Activated CD4-positive, alpha-beta T cell treated with anti-CD3 and anti-CD28 coated beads for 36 hours (primary cell): ENCODE measurements at regions of chr11 and their contacts with region 1.

Region 1: DNA sequence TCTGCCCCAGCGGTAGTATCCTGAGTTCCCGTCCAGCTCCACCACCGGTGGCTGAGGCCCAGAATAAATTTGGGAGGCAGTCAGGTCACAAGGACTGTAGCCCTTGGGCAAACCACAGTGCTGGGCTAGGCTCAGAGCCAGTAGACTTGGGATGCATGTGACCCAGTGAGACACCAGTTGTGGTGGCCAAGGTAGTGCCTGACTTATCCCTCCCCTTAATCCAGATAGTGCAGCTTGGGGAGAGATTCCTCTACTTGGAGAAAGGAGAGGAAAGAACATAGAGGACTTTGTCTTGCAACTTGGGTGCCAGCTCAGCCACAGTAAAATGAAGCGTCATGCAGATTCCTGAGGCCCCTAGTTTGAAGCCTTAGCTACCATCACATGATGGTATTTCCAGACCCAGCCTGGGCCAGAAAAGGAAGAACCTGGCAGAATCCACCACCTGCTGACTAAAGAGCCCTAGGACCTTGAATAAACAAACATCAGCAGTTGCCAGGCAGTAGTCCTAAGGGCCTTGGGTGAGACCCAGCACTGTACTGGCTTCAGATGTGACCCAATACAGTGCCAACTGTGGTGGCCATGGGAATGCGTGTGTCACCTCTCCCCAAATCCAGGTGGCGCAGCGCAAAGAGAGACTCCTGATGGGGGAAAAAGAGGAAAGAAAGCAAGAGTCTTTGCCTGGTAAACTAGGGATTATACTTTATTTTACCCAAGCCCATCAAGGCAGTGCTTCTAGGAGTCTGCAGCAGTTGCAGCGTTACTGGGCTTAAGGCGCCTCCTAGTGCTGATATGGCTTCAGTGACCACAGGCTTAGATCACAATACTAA is 17.0 kb upstream of the DDX10 start:
- DNase-seq: peak; percentile 81
- ATAC-seq: peak; percentile 99
- H3K4me3 Mint-ChIP-seq: no peak overlapping the region
- H3K27ac Mint-ChIP-seq: no peak overlapping the region
- H3K4me1 Mint-ChIP-seq: no peaks in the 10 kb centered on the region
- H3K27me3 Mint-ChIP-seq: no peaks in the 10 kb centered on the region

Region 2: DNA sequence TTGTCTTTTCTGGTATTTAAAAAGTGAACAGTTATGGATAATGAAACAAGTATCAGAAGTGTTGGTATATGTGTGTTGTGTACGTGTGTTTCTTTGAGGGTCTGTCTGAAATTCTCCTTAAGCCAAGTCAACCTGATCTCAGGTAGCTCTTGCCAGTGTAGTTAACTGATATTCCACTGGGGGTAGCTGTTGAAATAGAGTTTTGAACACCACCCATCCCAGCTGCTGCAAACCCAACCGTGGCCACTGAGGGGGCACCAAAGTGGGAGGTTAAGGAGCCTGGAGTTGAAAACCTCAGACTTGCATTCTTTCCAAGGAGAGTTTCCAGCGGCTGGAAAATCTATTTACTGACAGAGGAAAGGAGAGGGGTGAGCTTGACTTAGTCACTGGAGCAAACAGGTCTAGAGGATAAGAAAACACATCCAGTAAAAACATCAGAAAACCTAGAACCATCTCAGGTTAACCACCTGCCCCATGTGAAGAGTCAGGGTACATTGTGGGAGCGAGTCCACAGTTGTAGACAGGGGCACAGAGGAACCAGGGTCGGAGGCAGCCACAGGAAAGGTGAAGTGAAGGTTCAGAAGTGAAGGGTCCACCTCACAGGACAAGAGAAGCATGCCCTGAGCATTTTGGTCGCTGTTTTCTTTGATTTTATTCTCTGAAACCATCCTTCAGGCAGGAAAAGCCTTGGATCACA is 648.0 kb before region 1 on chr11:
- CTCF ChIA-PET with region 1: interaction called, 3 read pairs
- POLR2A ChIA-PET with region 1: no interaction called
- intact Hi-C with region 1: loop called (anchors 2 kb)
- DNase-seq: peak; percentile 58
- ATAC-seq: peak; percentile 85
- H3K4me3 Mint-ChIP-seq: no peak overlapping the region
- H3K27ac Mint-ChIP-seq: no peak overlapping the region
- H3K4me1 Mint-ChIP-seq: no peaks in the 10 kb centered on the region
- H3K27me3 Mint-ChIP-seq: peaks cover 2% of the 10 kb centered on the region

Region 3: GRCh38 chr11:108135845-108136544 is 511.9 kb before region 1 on chr11:
- CTCF ChIA-PET with region 1: no interaction called
- POLR2A ChIA-PET with region 1: no interaction called
- intact Hi-C with region 1: loop called in 1 of 2 experiments (anchors 5 kb)
- DNase-seq: peak; percentile 60
- ATAC-seq: peak; percentile 60
- H3K4me3 Mint-ChIP-seq: no peak overlapping the region
- H3K27ac Mint-ChIP-seq: peak overlapping the region; percentile 80
- H3K4me1 Mint-ChIP-seq: peaks cover 26% of the 10 kb centered on the region
- H3K27me3 Mint-ChIP-seq: no peaks in the 10 kb centered on the region

Region 4: DNA sequence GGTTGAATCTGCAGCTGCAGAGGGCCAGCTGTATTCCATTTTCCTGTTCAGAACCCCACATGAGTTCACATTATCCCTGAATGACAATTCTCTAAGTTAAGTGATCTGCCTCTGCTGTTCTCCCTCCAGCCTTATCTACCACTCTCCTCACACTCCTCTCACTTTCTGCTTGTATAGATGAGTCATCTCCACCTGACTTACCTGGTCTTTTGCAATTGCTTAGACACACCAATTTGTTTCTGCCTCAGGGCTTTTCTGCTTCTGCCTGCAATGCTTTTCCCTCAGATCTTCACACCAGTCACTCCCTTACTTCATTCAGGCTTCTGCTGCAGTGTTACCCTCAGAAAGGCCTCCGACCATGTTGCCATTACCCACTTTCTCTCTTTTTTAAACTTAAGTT is 306.9 kb before region 1 on chr11:
- CTCF ChIA-PET with region 1: interaction called, 4 read pairs
- POLR2A ChIA-PET with region 1: no interaction called
- intact Hi-C with region 1: loop called in 1 of 2 experiments (anchors 5 kb)
- DNase-seq: no peak
- ATAC-seq: peak; percentile 75
- H3K4me3 Mint-ChIP-seq: no peak overlapping the region
- H3K27ac Mint-ChIP-seq: no peak overlapping the region
- H3K4me1 Mint-ChIP-seq: peaks cover 47% of the 10 kb centered on the region
- H3K27me3 Mint-ChIP-seq: no peaks in the 10 kb centered on the region

Region 5: DNA sequence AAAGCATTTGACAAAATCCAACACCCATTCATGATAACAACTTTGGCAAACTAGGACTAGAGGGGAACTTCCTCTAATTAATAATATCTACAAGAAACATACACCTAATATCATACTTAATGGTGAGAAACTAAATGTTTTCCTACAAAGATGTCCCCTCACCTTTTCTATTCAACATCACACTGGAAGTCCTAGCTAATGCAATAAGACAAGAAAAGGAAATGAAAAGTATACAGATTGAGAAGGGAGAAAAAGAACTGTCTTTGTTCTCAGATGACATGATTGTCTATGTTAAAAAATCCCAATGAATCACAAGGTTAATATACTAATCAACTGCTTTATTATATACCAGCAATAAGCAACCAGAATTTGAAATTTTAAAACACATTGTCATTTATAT is 233.0 kb before region 1 on chr11:
- CTCF ChIA-PET with region 1: interaction called, 3 read pairs
- POLR2A ChIA-PET with region 1: no interaction called
- intact Hi-C with region 1: loop called (anchors 5 kb)
- DNase-seq: no peak
- ATAC-seq: no peak
- H3K4me3 Mint-ChIP-seq: no peak overlapping the region
- H3K27ac Mint-ChIP-seq: no peak overlapping the region
- H3K4me1 Mint-ChIP-seq: no peaks in the 10 kb centered on the region
- H3K27me3 Mint-ChIP-seq: no peaks in the 10 kb centered on the region

Region 6: GRCh38 chr11:108825381-108825780 is 177.5 kb after region 1 on chr11:
- CTCF ChIA-PET with region 1: no interaction called
- POLR2A ChIA-PET with region 1: no interaction called
- intact Hi-C with region 1: no loop called
- DNase-seq: no peak
- ATAC-seq: no peak
- H3K4me3 Mint-ChIP-seq: no peak overlapping the region
- H3K27ac Mint-ChIP-seq: no peak overlapping the region
- H3K4me1 Mint-ChIP-seq: peaks cover 11% of the 10 kb centered on the region
- H3K27me3 Mint-ChIP-seq: no peaks in the 10 kb centered on the region

Region 7: GRCh38 chr11:109728056-109728455 is 1080.1 kb after region 1 on chr11:
- CTCF ChIA-PET with region 1: no interaction called
- POLR2A ChIA-PET with region 1: no interaction called
- intact Hi-C with region 1: no loop called
- DNase-seq: no peak
- ATAC-seq: no peak
- H3K4me3 Mint-ChIP-seq: no peak overlapping the region
- H3K27ac Mint-ChIP-seq: no peak overlapping the region
- H3K4me1 Mint-ChIP-seq: no peaks in the 10 kb centered on the region
- H3K27me3 Mint-ChIP-seq: peaks cover 2% of the 10 kb centered on the region